ENCODE measurements at regions of chr2 and their contacts with region 1.

Region 1: DNA sequence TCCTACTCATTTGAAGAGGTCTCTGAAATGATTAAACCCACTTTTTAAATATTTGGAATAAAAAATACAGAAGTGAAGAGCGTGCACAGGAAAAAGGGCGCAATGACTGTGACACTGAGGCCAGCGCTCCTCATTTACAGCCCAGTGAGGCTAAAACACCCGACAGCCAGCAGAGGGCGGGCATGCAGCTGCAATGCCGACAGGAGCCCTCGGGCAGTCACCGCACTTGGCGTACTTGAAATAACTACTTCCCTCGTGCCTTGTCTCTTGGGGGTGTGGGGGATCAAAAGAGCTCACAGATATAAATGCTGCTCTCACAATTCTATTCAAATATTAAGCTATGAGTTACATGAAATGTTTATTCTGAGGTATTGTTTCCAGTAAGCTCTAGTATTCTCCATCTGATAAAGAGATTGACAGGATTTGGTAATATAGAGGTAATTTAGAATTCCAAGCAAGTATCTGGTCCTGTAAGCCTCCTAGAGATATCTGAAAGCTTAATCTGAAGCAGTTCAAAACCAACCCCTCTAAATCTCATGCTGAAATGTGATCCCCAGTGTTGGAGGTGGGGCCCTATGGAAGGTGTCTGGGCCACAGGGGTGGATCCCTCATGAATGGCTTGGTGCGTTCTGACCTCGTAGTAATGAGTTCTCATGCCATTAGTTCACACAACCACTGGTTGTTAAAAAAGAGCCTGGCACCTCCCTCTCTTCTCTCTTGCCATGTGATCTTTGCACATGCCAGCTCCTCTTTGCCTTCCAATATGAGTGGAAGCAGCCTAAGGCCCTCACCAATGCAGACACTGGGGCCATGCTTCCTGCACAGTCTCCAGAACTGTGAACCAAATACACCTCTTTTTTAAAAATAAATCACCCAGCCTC is 93.6 kb downstream of the ZAP70 start:
- DNase-seq: peak; percentile 91
- ATAC-seq: peak; percentile 94

Region 2: DNA sequence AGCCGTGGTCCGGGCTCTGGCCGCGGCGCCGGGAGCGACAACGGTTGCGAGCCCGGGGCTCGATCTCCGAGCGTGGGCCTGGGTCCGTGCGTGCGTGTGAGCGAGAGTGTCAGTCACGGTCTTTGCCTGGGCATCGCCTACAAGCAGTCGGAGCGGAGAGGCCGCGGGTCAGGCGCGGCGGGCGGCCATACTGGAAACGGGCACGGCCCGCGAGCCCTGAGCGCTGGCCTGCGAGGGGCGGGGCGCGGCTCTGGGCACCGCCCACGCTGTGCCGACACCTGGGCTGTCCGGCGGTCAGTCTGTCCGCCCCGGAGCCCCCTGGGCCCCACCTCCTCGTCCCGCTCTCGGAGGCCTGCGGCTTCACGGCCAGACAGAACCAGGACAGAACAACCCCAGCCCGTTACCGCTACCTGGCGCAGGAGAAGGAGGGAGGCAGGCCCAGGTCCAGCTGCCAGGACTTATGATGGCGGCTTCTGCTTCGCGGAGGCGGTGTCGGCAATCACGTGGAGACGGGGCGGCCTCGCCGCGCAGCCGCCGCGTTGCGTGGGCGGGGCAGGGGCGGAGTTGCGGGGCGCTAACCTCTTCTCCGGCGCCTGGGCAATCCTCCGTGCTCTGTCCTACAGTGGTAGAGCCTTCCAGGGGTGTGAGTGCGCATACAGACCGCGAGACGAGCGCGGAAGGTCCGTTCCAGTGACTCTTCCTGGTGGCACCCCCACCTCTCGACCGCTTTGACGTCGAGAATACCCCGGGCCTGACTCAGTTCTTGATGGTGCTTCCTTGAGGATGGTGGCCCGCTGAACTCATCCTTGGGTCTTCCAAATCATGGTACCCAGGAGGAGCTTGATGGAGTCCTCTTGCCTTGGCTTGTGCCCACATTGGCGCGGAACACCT is 189.0 kb after region 1 on chr2 and contains the start of gene TMEM131:
- intact Hi-C with region 1: loop called (anchors 5 kb)
- DNase-seq: peak; percentile 97
- ATAC-seq: peak; percentile 98
- total RNA-seq, gene TMEM131: 26.0 TPM

Region 3: GRCh38 chr2:98160554-98160953 is 353.6 kb after region 1 on chr2:
- intact Hi-C with region 1: loop called (anchors 10 kb)
- DNase-seq: no peak
- ATAC-seq: peak; percentile 74

Region 4: GRCh38 chr2:98269830-98270229 is 462.9 kb after region 1 on chr2:
- intact Hi-C with region 1: loop called (anchors 2 kb)
- DNase-seq: no peak
- ATAC-seq: no peak

Region 5: DNA sequence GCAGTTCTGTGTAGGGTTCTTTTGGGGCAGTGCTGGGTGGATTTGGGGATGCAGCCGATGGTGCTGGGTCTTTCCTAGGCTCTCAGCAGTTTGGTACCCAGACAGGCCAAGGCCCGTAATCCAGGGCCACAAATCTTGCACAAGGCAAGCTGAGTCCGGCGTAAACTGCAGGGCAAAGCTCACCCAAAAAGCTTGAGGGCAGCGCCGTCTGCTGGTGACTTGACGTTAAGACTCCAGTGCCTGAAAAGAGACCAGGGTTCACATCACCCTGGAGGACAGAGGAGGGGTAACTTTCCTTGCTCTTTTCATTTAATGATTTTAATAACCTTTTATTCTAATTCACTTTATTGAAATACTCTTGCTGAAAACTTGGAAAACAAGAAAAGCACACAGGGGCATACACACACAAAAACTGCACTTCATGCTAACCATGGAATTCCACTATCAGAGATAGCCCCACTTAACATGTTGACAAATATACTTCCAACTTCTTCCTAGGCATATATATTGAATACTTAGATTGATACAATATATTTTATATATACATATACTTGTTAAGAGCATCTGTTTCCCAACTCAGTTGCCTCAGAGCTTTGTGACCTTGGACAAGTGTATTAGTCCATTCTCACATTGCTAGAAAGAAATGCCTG is 578.2 kb after region 1 on chr2:
- intact Hi-C with region 1: loop called (anchors 2 kb)
- DNase-seq: peak; percentile 83
- ATAC-seq: peak; percentile 62

Measured in Right ventricle myocardium inferior (tissue), 1 donor.